Sigmoid colon (tissue), 7 donors: ENCODE measurements at regions of chr2 and their contacts with region 1.

Region 1: DNA sequence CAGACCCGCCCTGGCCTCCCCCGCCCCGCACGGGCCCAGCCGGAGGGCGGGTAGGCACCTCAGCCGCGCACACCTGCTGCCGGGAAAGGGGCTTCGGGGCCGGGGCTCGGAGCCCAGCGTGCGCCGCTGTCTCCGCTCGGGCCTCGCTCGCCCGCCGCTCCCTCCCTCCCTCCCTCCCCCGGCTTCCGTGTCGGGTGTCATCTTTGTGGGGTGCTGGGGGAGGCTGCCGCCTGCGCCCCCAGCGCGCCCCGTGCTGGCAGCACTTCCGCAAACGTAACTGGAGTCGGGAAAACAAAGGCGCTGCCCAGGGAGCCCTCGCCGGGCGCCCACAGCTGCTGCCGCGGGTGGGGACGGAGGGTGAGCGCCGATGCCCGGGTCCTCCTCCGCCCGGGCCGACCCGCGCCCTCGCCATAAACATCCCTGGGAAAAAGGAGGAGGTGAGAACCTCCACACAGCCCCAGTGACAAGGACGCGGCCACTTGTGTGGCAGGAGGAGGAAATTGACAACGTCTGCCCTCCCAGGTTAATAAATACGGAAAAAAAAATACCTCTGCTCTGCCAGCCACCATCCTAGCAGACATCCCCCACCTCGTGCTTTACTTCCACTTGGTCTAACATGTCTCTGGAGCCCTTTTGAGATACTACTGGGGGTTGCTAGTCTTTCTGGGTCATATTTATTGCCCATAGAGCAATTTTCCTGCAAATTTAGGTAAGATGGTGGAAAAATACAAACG is 550 bp downstream of the MFSD6 start:
- DNase-seq: peak; percentile 73
- H3K4me3 ChIP-seq: peak overlapping the region; percentile 75 to 98 (median 82)
- H3K27ac ChIP-seq: peak overlapping the region; percentile 79 to 88 (median 80)
- H3K4me1 ChIP-seq: peaks cover 0 to 26% (median 17%) of the 10 kb centered on the region in 4 donors
- H3K27me3 ChIP-seq: no peaks in the 10 kb centered on the region
- CTCF ChIP-seq: no peak
- EP300 ChIP-seq: no peak
- POLR2A ChIP-seq: peak in 1 of 2 donors; percentile 16

Region 2: GRCh38 chr2:190343500-190344275 is 65.0 kb before region 1 on chr2 and contains the start of gene INPP1:
- intact Hi-C with region 1: no loop called
- DNase-seq: peak; percentile 85
- H3K4me3 ChIP-seq: peak within 1 kb of the TSS; percentile 61 to 91 (median 80)
- H3K27ac ChIP-seq: peak within 1 kb of the TSS; percentile 91 to 94 (median 94)
- H3K4me1 ChIP-seq: peaks cover 0 to 29% (median 18%) of the 10 kb centered on the region in 4 donors
- H3K27me3 ChIP-seq: no peaks in the 10 kb centered on the region
- CTCF ChIP-seq: no peak
- EP300 ChIP-seq: no peak
- POLR2A ChIP-seq: no peak
- total RNA-seq, gene INPP1: 12.5 to 19.9 (median 15.5) TPM

Region 3: DNA sequence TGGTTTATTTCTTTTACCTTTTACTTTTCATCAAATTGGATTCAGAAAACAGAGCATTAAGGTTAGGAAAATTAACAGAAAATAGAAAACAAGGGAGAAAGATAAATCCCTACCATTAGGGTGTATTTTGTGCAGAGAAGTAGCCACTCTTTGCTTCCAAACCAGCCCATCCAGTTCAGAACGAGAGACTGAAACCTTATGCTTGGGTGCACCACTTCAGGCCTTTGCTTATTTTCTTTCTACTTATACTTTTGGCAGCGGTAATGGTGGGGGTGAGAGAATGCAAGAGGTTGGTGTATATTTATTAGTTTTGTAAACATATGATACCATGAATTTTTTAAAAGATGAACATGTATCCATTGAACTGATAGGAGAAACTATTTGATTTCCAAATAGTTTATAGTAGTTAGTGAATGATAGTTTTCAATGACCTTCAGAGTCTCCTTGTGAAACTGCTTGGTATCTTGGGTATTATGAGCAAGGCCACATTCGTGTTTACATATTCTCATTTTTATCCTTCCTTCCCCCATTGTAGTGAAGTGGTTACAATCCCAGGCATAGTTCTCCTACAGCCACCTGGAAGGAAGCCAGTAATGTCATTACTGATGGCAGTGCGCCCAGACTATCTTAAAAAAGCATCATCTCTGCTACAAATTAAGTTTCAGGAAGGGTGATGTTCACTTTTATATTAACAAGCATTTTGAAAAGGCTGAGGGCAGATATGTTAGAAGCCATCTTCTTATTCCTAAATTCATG is 60.3 kb after region 1 on chr2:
- intact Hi-C with region 1: loop called (anchors 2 kb)
- DNase-seq: peak; percentile 92
- H3K4me3 ChIP-seq: no peak overlapping the region
- H3K27ac ChIP-seq: peak overlapping the region; percentile 80 to 87 (median 86)
- H3K4me1 ChIP-seq: peaks cover 0 to 43% (median 41%) of the 10 kb centered on the region in 4 donors
- H3K27me3 ChIP-seq: no peaks in the 10 kb centered on the region
- CTCF ChIP-seq: no peak
- EP300 ChIP-seq: peak in 3 of 4 donors; percentile 36 to 72 (median 69)
- POLR2A ChIP-seq: no peak

Region 4: DNA sequence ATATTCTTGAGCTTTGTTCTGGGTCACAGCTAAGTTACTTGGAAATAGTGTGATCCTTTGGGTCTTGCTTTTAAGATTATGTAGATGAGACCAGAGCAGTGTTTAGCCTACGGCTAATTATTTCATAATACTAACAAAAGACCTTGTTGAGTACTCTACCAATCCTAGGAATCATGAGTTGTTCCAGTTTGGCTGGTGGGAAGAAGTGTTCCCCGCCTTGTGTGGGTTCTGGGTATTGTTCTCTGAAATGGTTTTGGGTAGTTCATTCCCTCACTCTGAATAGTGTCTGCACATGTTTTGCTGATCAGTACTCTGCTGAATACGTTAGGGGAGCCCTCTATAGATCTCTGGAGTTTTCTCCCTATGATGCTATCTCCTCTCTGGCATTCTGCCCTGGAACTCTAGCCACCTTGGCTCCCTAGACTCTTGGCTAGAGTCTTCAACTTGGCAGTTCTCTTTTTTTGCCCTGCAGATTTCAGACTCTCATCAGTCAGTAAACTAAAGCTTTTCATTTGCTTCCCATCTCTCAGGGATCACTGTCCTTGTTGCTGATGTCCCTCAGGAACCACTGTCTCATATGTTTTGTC is 77.4 kb after region 1 on chr2:
- intact Hi-C with region 1: loop called (anchors 5 kb)
- DNase-seq: no peak
- H3K4me3 ChIP-seq: no peak overlapping the region
- H3K27ac ChIP-seq: no peak overlapping the region
- H3K4me1 ChIP-seq: peaks cover 0 to 11% (median 8%) of the 10 kb centered on the region in 4 donors
- H3K27me3 ChIP-seq: no peaks in the 10 kb centered on the region
- CTCF ChIP-seq: no peak
- EP300 ChIP-seq: no peak
- POLR2A ChIP-seq: no peak

Region 5: DNA sequence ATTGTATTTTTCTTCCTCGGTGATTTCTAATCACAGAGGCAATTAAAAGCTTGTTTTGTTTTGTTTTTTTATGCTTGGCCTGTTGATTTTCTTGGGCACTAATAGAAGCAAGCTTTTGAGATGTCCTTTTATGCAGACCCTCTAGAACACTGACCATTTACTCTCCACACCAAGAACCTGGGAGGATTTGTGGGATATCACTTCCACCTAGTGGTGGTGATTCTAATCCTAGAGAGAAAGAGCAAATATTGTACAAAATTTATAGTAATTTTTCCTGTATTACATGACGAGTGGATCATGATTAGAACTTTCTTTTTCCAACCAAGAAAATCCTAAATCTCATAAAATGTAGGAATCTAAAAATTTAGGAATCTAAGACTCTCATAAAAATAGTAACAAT is 102.4 kb after region 1 on chr2:
- intact Hi-C with region 1: loop called (anchors 5 kb)
- DNase-seq: no peak
- H3K4me3 ChIP-seq: no peak overlapping the region
- H3K27ac ChIP-seq: no peak overlapping the region
- H3K4me1 ChIP-seq: peaks cover 0 to 11% (median 0%) of the 10 kb centered on the region in 4 donors
- H3K27me3 ChIP-seq: no peaks in the 10 kb centered on the region
- CTCF ChIP-seq: peak; percentile 5 to 63 (median 39)
- EP300 ChIP-seq: no peak
- POLR2A ChIP-seq: no peak